Activated CD4-positive, alpha-beta memory T cell treated with anti-CD3 and anti-CD28 coated beads, Interleukin-2, amount 10 ng/mL, durations not matched to agents 7 days and 5 days (primary cell): ENCODE measurements at regions of chr5 and their contacts with region 1.

Region 1: DNA sequence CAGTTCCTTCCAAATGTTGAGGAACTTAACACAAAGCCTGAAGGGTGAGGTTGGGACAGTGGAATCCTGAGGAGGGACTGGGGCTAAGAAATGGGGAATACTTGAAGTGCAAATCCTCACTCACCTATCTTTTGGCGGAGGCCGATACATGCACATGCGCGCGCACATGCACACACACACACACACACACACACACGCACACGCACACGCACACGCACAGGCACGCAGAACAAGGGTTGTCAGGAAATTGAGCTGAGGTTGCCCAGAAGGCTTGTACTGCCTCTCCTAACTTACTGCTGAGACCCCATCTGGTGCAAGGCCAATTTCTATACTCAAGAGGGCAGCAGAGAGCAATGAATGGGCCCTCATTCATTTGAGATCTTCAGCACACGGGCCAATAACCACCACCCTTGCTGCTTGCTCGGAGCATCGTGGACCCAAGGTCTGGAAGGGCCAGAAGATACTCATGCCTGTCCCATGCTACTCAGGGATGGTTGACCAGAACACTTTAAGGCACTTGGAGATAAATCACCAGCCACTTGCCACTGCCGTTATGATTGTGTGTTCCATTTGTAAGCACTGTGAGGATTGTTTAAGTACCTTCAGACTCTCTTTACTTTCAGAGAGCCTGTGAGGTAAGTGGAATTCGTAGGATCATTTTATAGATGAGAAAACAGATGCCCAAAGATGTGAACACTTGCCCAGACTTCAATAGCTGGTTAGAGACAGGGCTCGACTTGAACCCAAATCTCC is 21.5 kb downstream of the BTF3 start:
- DNase-seq: peak; percentile 75
- H3K4me3 Mint-ChIP-seq: peak overlapping the region; percentile 38
- H3K27ac Mint-ChIP-seq: peak overlapping the region; percentile 41
- H3K4me1 Mint-ChIP-seq: peaks cover 8% of the 10 kb centered on the region
- H3K27me3 Mint-ChIP-seq: no peaks in the 10 kb centered on the region

Region 2: GRCh38 chr5:73280821-73281746 is 238.6 kb before region 1 on chr5:
- CTCF ChIA-PET with region 1: no interaction called
- POLR2A ChIA-PET with region 1: no interaction called
- DNase-seq: no peak
- H3K4me3 Mint-ChIP-seq: no peak overlapping the region
- H3K27ac Mint-ChIP-seq: no peak overlapping the region
- H3K4me1 Mint-ChIP-seq: no peaks in the 10 kb centered on the region
- H3K27me3 Mint-ChIP-seq: peaks cover 21% of the 10 kb centered on the region

Region 3: DNA sequence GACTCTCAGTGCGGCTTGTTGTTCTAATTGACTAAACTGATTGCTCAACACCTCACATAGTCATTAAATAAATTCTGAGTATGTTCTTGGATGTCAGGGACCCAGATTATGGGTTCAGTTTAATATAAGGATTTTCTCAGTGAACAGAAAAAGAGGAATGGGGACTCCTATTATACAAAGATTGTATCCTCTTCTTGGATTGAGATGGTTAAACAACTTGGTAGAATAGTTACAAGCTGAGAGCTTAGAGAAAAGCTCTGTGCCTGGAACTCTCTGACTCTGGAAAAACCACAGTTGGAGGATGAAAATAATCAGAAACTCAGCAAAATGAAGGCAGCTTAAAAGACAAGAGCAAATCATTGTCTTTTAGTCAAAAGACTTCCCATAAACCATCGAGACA is 15.3 kb after region 1 on chr5:
- CTCF ChIA-PET with region 1: interaction called, 67 read pairs
- POLR2A ChIA-PET with region 1: no interaction called
- DNase-seq: no peak
- H3K4me3 Mint-ChIP-seq: no peak overlapping the region
- H3K27ac Mint-ChIP-seq: no peak overlapping the region
- H3K4me1 Mint-ChIP-seq: no peaks in the 10 kb centered on the region
- H3K27me3 Mint-ChIP-seq: peaks cover 40% of the 10 kb centered on the region